HEK293 (cell line): ENCODE measurements at regions of chr17 and their contacts with region 1.

Region 1: DNA sequence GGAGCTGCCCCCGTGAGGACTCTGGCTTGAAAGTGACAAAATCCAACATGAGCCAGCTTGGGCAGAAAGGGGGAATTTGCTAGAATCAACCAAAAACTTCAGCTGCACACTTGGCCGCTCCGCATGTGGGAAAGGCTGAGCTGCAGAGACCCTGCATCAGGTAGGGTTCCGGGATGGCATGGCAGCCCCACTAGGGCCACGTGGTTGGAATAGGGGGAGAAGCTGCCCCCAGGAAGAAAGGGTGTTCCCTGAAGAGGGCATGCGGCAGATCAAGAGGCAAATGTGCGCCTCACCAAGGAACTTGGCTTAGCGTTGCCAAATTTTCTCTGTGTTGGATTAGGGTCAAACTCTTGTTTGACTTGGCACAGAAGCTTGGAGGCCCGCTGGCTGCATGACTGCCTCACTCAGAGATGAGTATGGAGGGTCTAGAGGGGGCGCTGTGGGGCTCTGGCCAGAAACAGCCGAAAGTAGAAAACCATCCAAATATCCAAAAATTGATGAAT is 29.2 kb upstream of the WFIKKN2 start:
- H3K4me3 ChIP-seq: no peak overlapping the region
- H3K27ac ChIP-seq: no peak overlapping the region
- H3K4me1 ChIP-seq: no peaks in the 10 kb centered on the region; the same call in 1 of the 2 replicates
- CTCF ChIP-seq: no peak

Region 2: GRCh38 chr17:50575581-50576210 is 230.5 kb before region 1 on chr17:
- CTCF ChIA-PET with region 1: no interaction called
- POLR2A ChIA-PET with region 1: no interaction called
- H3K4me3 ChIP-seq: no peak overlapping the region
- H3K27ac ChIP-seq: no peak overlapping the region
- H3K4me1 ChIP-seq: no peaks in the 10 kb centered on the region
- CTCF ChIP-seq: no peak

Region 3: GRCh38 chr17:51107778-51108177 is 301.6 kb after region 1 on chr17:
- CTCF ChIA-PET with region 1: no interaction called
- POLR2A ChIA-PET with region 1: interaction called, 10 read pairs
- H3K4me3 ChIP-seq: no peak overlapping the region
- H3K27ac ChIP-seq: no peak overlapping the region
- H3K4me1 ChIP-seq: peaks cover 8% of the 10 kb centered on the region
- CTCF ChIP-seq: no peak